ENCODE measurements at regions of chr15 and their contacts with region 1.

Region 1: GRCh38 chr15:61393949-61394348 is 164.8 kb upstream of the RORA start:
- DNase-seq: no peak
- H3K4me3 Mint-ChIP-seq: no peak overlapping the region
- H3K27ac Mint-ChIP-seq: no peak overlapping the region
- H3K4me1 Mint-ChIP-seq: peaks cover 8% of the 10 kb centered on the region
- H3K27me3 Mint-ChIP-seq: no peaks in the 10 kb centered on the region
- CTCF ChIP-seq: no peak

Region 2: GRCh38 chr15:61383421-61383820 is 10.5 kb before region 1 on chr15:
- CTCF ChIA-PET with region 1: no interaction called
- POLR2A ChIA-PET with region 1: no interaction called
- intact Hi-C with region 1: no loop called
- DNase-seq: peak; percentile 38
- H3K4me3 Mint-ChIP-seq: no peak overlapping the region
- H3K27ac Mint-ChIP-seq: no peak overlapping the region
- H3K4me1 Mint-ChIP-seq: no peaks in the 10 kb centered on the region
- H3K27me3 Mint-ChIP-seq: no peaks in the 10 kb centered on the region
- CTCF ChIP-seq: no peak

Region 3: GRCh38 chr15:61411902-61412510 is 18.1 kb after region 1 on chr15:
- CTCF ChIA-PET with region 1: interaction called, 6 read pairs
- POLR2A ChIA-PET with region 1: interaction called, 3 read pairs
- intact Hi-C with region 1: loop called (anchors 1 kb)
- DNase-seq: no peak
- H3K4me3 Mint-ChIP-seq: no peak overlapping the region
- H3K27ac Mint-ChIP-seq: no peak overlapping the region
- H3K4me1 Mint-ChIP-seq: peaks cover 6% of the 10 kb centered on the region
- H3K27me3 Mint-ChIP-seq: peaks cover 7% of the 10 kb centered on the region
- CTCF ChIP-seq: no peak

Region 4: GRCh38 chr15:61671736-61672135 is 277.8 kb after region 1 on chr15:
- CTCF ChIA-PET with region 1: no interaction called
- POLR2A ChIA-PET with region 1: no interaction called
- intact Hi-C with region 1: no loop called
- DNase-seq: no peak
- H3K4me3 Mint-ChIP-seq: no peak overlapping the region
- H3K27ac Mint-ChIP-seq: no peak overlapping the region
- H3K4me1 Mint-ChIP-seq: no peaks in the 10 kb centered on the region
- H3K27me3 Mint-ChIP-seq: no peaks in the 10 kb centered on the region
- CTCF ChIP-seq: no peak